ENCODE measurements at regions of chr10 and their contacts with region 1.

Region 1: GRCh38 chr10:12720217-12720981 is 281.1 kb downstream of the CCDC3 start:
- DNase-seq: peak; percentile 81
- H3K4me3 Mint-ChIP-seq: no peak overlapping the region
- H3K27ac Mint-ChIP-seq: peak overlapping the region; percentile 82
- H3K4me1 Mint-ChIP-seq: peaks cover 37% of the 10 kb centered on the region
- H3K27me3 Mint-ChIP-seq: no peaks in the 10 kb centered on the region

Region 2: GRCh38 chr10:12703813-12704212 is 16.6 kb before region 1 on chr10:
- CTCF ChIA-PET with region 1: interaction called, 5 read pairs
- POLR2A ChIA-PET with region 1: interaction called, 7 read pairs
- intact Hi-C with region 1: loop called (anchors 1 kb)
- DNase-seq: no peak
- H3K4me3 Mint-ChIP-seq: no peak overlapping the region
- H3K27ac Mint-ChIP-seq: peak overlapping the region; percentile 81
- H3K4me1 Mint-ChIP-seq: peaks cover 86% of the 10 kb centered on the region
- H3K27me3 Mint-ChIP-seq: no peaks in the 10 kb centered on the region

Region 3: GRCh38 chr10:12981570-12981969 is 261.2 kb after region 1 on chr10:
- CTCF ChIA-PET with region 1: no interaction called
- POLR2A ChIA-PET with region 1: no interaction called
- intact Hi-C with region 1: loop called (anchors 5 kb)
- DNase-seq: no peak
- H3K4me3 Mint-ChIP-seq: no peak overlapping the region
- H3K27ac Mint-ChIP-seq: no peak overlapping the region
- H3K4me1 Mint-ChIP-seq: peaks cover 7% of the 10 kb centered on the region
- H3K27me3 Mint-ChIP-seq: peaks cover 23% of the 10 kb centered on the region

Measured in activated CD4-positive, alpha-beta memory T cell treated with anti-CD3 and anti-CD28 coated beads for 36 hours (primary cell).